HepG2 (cell line): ENCODE measurements at regions of chr4 and their contacts with region 1.

Region 1: GRCh38 chr4:173025131-173025530 is 143.5 kb upstream of the GALNT7 start:
- DNase-seq: peak; percentile 38
- ATAC-seq: peak; percentile 77
- H3K4me3 ChIP-seq: no peak overlapping the region
- H3K27ac ChIP-seq: no peak overlapping the region
- H3K4me1 ChIP-seq: no peaks in the 10 kb centered on the region
- H3K27me3 ChIP-seq: no peaks in the 10 kb centered on the region
- CTCF ChIP-seq: peak; percentile 53
- EP300 ChIP-seq: no peak
- POLR2A ChIP-seq: no peak
- RAD21 ChIP-seq: no peak

Region 2: DNA sequence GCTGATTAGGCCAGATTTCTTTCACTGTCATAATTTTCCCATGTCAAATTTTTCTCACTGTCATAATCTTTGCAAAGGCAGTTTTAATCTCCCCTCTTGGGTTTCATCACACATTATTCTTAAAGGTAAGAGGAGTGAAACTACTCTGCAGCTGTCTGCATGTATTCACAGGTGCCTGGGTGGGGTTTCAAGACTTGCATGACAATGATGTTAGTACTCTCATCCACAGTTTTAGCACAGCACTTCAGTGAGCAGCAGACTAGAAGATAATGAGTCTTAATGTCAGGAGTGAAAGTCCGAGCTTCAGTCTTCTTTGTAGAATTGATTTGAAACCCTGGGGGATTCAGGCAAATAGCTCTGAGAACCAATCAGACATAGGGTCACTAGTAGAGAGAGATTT is 39.0 kb before region 1 on chr4:
- CTCF ChIA-PET with region 1: no interaction called
- POLR2A ChIA-PET with region 1: no interaction called
- in situ Hi-C with region 1: no loop called
- intact Hi-C with region 1: no loop called
- DNase-seq: no peak
- ATAC-seq: no peak
- H3K4me3 ChIP-seq: no peak overlapping the region
- H3K27ac ChIP-seq: no peak overlapping the region
- H3K4me1 ChIP-seq: 0 out of 2 replicates have a peak, but pooled peaks cover 8% of the 10 kb centered on the region
- H3K27me3 ChIP-seq: no peaks in the 10 kb centered on the region; a peak in 1 of 5 replicates
- CTCF ChIP-seq: no peak
- EP300 ChIP-seq: no peak
- POLR2A ChIP-seq: no peak
- RAD21 ChIP-seq: no peak

Region 3: GRCh38 chr4:173168396-173169177 is 143.5 kb after region 1 on chr4 and contains the start of gene GALNT7:
- CTCF ChIA-PET with region 1: no interaction called
- POLR2A ChIA-PET with region 1: no interaction called
- in situ Hi-C with region 1: no loop called
- intact Hi-C with region 1: loop called (anchors 10 kb)
- DNase-seq: no peak
- ATAC-seq: peak; percentile 62
- H3K4me3 ChIP-seq: peak within 1 kb of the TSS; percentile 46 to 69 (median 56); a peak in 5 of 6 replicates
- H3K27ac ChIP-seq: no peak within 1 kb of the TSS
- H3K4me1 ChIP-seq: peaks cover 15% of the 10 kb centered on the region
- H3K27me3 ChIP-seq: peaks cover 4 to 44% of the 10 kb centered on the region in 2 experiments
- CTCF ChIP-seq: no peak
- EP300 ChIP-seq: no peak
- POLR2A ChIP-seq: no peak
- RAD21 ChIP-seq: no peak
- total RNA-seq, gene GALNT7: 0.13 TPM in 1 of 2 replicates, not detected in the other

Region 4: GRCh38 chr4:173205656-173206055 is 180.5 kb after region 1 on chr4:
- CTCF ChIA-PET with region 1: no interaction called
- POLR2A ChIA-PET with region 1: no interaction called
- in situ Hi-C with region 1: no loop called
- intact Hi-C with region 1: no loop called
- DNase-seq: no peak
- ATAC-seq: no peak
- H3K4me3 ChIP-seq: no peak overlapping the region
- H3K27ac ChIP-seq: no peak overlapping the region
- H3K4me1 ChIP-seq: no peaks in the 10 kb centered on the region
- H3K27me3 ChIP-seq: no peaks in the 10 kb centered on the region
- CTCF ChIP-seq: no peak
- EP300 ChIP-seq: no peak
- POLR2A ChIP-seq: no peak
- RAD21 ChIP-seq: no peak

Region 5: GRCh38 chr4:173257732-173258717 is 232.9 kb after region 1 on chr4:
- CTCF ChIA-PET with region 1: interaction called, 11 read pairs
- POLR2A ChIA-PET with region 1: no interaction called
- in situ Hi-C with region 1: no loop called
- intact Hi-C with region 1: loop called (anchors 1 kb)
- DNase-seq: peak; percentile 29
- ATAC-seq: peak; percentile 95
- H3K4me3 ChIP-seq: no peak overlapping the region
- H3K27ac ChIP-seq: no peak overlapping the region
- H3K4me1 ChIP-seq: no peaks in the 10 kb centered on the region
- H3K27me3 ChIP-seq: no peaks in the 10 kb centered on the region; a peak in 1 of 5 replicates
- CTCF ChIP-seq: peak; percentile 74
- EP300 ChIP-seq: no peak
- POLR2A ChIP-seq: no peak
- RAD21 ChIP-seq: no peak